Activated CD8-positive, alpha-beta memory T cell treated with anti-CD3 and anti-CD28 coated beads, Interleukin-2, amount 10 ng/mL, durations not matched to agents 7 days and 5 days (primary cell): ENCODE measurements at regions of chr19 and their contacts with region 1.

Region 1: GRCh38 chr19:4815426-4816201 is 15.9 kb downstream of the TICAM1 start:
- DNase-seq: peak; percentile 85
- ATAC-seq: peak; percentile 82
- H3K4me3 Mint-ChIP-seq: peak overlapping the region; percentile 57
- H3K27ac Mint-ChIP-seq: peak overlapping the region; percentile 41
- H3K4me1 Mint-ChIP-seq: peaks cover 28% of the 10 kb centered on the region
- H3K27me3 Mint-ChIP-seq: no peaks in the 10 kb centered on the region

Region 2: DNA sequence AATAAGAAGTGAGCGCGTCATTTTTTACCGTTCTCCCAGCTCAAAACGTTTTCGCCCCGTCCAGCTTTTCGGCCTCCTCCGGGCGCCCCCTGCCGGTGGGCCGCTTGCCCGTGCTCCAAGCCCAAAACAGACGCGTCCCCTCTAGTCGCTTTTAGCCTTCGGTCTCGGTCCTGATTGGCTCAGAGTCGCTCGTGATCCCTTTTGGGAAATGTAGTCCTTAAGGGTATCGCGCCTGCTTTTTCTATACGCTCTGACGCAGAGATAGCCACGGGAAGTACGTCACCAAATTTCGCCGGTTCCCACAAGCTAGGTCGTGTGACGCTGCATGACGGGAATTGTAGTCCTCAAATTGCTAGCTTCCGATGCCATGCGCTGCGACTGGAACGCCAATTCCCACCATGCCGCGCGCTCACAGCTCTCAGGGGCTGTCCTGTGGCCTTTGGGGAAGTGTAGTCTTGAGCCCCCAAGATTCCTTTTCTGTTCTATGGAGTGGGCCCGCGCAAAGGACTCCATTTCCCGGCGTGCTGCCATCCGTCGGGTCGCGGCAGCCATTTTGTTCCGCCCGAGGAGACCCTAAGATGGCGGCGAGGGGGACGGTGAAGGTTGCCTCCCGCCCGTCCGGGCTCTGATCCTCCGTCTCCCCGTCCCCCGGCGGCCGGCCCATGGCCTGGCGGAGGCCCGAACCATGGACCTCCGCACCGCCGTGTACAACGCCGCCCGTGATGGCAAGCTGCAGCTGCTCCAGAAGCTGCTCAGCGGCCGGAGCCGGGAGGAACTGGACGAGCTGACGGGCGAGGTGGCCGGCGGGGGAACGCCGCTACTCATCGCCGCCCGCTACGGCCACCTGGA is 24.2 kb before region 1 on chr19 and contains the start of gene FEM1A:
- CTCF ChIA-PET with region 1: interaction called, 33 read pairs
- DNase-seq: peak; percentile 99
- ATAC-seq: peak; percentile 97
- H3K4me3 Mint-ChIP-seq: peak within 1 kb of the TSS; percentile 82
- H3K27ac Mint-ChIP-seq: peak within 1 kb of the TSS; percentile 87
- H3K4me1 Mint-ChIP-seq: peaks cover 35% of the 10 kb centered on the region
- H3K27me3 Mint-ChIP-seq: no peaks in the 10 kb centered on the region
- total RNA-seq, gene FEM1A: 11.5 to 16.8 TPM

Region 3: GRCh38 chr19:4831304-4831978 is 15.8 kb after region 1 on chr19 and contains the start of gene TICAM1:
- CTCF ChIA-PET with region 1: interaction called, 46 read pairs
- DNase-seq: peak; percentile 78
- ATAC-seq: peak; percentile 94
- H3K4me3 Mint-ChIP-seq: peak within 1 kb of the TSS; percentile 87
- H3K27ac Mint-ChIP-seq: peak within 1 kb of the TSS; percentile 84
- H3K4me1 Mint-ChIP-seq: peaks cover 30% of the 10 kb centered on the region
- H3K27me3 Mint-ChIP-seq: no peaks in the 10 kb centered on the region
- total RNA-seq, gene TICAM1: 19.5 to 22.4 TPM

Region 4: DNA sequence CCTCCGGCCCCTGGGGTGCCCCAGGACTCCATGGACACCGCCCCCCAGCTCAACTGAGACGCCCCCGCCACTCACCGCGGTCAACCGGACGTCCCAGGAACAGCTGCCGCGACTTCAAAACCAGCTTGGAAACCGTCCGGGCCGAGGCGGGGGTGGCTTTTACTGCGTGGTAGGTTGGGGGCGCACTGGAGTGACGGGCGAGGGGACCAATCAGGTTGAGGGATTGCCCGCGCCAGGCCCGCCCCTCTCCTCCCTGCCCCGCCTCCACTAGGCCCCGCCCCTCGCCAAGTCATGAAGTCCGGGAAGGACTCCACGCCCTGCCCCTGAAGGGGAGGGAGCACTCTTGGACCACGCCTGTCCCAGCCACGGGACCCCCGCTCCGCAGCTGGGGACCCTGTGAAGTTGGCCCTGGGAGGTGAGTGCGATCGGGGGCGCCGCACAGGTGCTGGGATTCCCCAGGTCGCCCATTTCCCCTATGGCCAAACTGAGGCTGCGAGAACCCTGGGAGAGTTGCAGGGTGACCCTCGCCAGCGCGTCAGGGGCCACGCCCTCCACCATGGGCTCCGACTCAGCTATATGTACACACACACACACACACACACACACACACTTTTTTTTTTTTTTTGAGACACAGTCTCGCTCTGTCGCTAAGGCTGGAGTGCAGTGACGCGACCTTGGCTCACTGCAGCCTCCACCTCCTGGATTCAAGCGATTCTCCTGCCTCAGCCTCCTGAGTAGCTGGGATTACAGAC is 52.1 kb after region 1 on chr19 and contains the start of gene PLIN3:
- CTCF ChIA-PET with region 1: interaction called, 43 read pairs
- DNase-seq: peak; percentile 94
- ATAC-seq: peak; percentile 94
- H3K4me3 Mint-ChIP-seq: peak within 1 kb of the TSS; percentile 74
- H3K27ac Mint-ChIP-seq: peak within 1 kb of the TSS; percentile 65
- H3K4me1 Mint-ChIP-seq: peaks cover 19% of the 10 kb centered on the region
- H3K27me3 Mint-ChIP-seq: peaks cover 3% of the 10 kb centered on the region
- total RNA-seq, gene PLIN3: 29.0 to 32.4 TPM

Region 5: DNA sequence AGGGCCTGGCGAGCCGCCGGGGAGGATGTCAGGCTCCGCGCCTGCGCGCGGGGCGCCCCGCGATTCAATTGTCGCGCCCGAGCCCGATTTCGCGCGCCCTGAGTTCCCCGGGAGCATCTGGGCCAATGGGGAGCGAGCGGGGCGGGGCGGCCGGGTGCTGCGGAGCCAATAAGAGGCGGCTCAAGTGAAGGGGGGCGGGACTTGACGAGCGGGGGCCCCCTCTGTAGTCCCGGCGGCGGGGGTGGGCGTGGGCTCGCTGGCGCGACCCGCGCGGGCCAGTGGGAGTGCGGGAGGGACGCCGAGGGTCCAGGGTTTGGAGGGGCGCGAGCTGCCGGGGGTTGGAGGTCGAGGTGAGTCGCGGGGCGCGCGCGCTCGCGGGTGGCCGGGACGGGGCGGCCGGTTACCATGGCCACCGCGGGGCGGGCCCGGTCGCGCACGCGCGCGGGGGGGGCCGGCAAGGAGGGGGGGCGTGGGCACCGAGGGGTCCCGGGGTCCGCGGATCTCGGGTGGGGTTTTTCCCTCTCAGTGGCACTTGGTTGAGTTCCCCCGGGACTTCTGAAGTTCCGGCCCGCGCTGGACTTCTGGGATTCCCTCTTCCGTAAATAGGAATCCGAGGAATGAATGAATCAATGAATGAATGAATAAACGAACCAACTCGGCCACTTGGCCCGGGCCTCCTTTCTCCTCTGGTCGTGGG is 94.4 kb after region 1 on chr19:
- CTCF ChIA-PET with region 1: interaction called, 121 read pairs
- DNase-seq: peak; percentile 97
- ATAC-seq: peak; percentile 88
- H3K4me3 Mint-ChIP-seq: peak overlapping the region; percentile 79
- H3K27ac Mint-ChIP-seq: peak overlapping the region; percentile 82
- H3K4me1 Mint-ChIP-seq: peaks cover 45% of the 10 kb centered on the region
- H3K27me3 Mint-ChIP-seq: no peaks in the 10 kb centered on the region

Region 6: DNA sequence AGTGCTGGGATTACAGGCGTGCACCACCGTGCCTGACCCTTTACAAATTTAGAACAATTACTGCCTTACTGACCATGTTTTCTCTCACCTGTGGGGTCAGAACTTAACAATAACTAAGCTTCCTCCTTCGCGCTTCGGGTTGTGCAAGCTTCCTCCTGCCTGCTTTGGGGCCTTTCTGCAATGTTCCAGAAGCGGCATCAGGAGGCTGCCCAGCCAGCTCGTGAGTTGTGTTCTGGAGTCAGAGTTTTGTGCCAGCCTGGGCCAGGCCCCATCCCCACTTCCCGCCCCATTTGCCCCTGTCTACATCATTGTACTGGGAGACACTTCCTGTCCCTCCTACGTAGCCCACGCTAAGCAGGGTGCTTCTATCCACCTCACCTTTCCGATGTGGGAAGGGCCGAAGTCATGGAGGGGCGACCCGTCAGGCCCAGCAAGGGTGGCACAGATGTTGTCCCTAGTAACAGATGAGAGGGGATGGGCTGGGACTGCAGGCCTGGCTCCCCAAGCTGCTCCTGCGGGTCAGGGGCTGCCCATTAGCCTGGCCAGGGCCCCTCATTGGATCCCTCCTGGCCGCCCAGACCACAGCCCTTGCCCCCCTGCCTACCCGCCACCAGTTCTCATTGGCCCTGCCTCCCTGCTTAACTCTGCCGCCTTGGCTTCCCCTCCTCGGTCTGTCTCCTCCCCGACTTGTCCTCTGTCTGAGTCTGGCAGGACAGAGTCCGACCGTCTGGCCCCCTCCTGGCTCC is 107.1 kb after region 1 on chr19:
- CTCF ChIA-PET with region 1: no interaction called
- DNase-seq: no peak
- ATAC-seq: no peak
- H3K4me3 Mint-ChIP-seq: no peak overlapping the region
- H3K27ac Mint-ChIP-seq: peak overlapping the region; percentile 40
- H3K4me1 Mint-ChIP-seq: peaks cover 15% of the 10 kb centered on the region
- H3K27me3 Mint-ChIP-seq: no peaks in the 10 kb centered on the region